Activated CD8-positive, alpha-beta T cell treated with anti-CD3 and anti-CD28 coated beads for 36 hours (primary cell): ENCODE measurements at regions of chr12 and their contacts with region 1.

Region 1: DNA sequence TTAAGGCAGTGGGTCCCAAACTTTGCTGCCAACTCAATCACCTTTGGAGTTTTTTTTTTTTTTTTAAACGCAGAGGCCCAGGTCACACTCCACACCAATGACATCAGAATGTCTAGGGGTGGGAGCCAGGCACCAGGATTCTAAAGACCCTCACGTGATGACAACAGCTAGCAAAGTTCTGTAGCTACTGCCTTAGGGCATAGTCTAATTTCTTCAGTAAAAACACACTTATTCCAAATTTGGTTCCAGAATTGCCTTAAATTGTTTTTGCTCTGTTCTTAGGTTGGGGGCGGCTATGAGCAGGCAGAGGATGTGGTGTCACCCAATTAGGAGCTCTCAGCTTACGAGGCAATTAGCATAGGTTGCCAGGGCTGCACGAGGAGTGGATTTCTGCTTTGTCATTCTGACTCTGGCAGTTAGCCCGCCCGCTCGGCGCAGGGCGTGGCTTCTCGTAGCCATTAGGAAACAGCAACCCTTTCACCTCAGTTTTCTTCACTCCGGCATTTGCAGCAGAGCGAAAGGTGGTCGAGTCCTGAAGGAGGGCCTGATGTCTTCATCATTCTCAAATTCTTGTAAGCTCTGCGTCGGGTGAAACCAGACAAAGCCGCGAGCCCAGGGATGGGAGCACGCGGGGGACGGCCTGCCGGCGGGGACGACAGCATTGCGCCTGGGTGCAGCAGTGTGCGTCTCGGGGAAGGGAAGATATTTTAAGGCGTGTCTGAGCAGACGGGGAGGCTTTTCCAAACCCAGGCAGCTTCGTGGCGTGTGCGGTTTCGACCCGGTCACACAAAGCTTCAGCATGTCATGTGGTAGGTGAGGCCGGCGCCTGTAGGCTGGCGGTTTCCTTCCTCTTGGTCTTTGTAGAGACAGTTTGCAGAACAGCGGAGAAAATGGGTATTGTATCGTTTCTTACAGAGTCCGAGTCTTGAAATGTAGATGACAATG is 16.7 kb upstream of the EID3 start:
- DNase-seq: peak; percentile 96
- ATAC-seq: peak; percentile 90
- H3K4me3 Mint-ChIP-seq: peak overlapping the region; percentile 93
- H3K27ac Mint-ChIP-seq: peak overlapping the region; percentile 98
- H3K4me1 Mint-ChIP-seq: peaks cover 12% of the 10 kb centered on the region
- H3K27me3 Mint-ChIP-seq: no peaks in the 10 kb centered on the region
- CTCF ChIP-seq: no peak

Region 2: GRCh38 chr12:104137913-104138796 is 148.7 kb before region 1 on chr12 and contains the start of gene NFYB:
- CTCF ChIA-PET with region 1: no interaction called
- POLR2A ChIA-PET with region 1: interaction called, 32 read pairs
- intact Hi-C with region 1: no loop called
- DNase-seq: peak; percentile 93
- ATAC-seq: peak; percentile 98
- H3K4me3 Mint-ChIP-seq: peak within 1 kb of the TSS; percentile 81
- H3K27ac Mint-ChIP-seq: peak within 1 kb of the TSS; percentile 92
- H3K4me1 Mint-ChIP-seq: peaks cover 18% of the 10 kb centered on the region
- H3K27me3 Mint-ChIP-seq: no peaks in the 10 kb centered on the region
- CTCF ChIP-seq: no peak
- total RNA-seq, gene NFYB: 26.7 to 30.6 TPM

Region 3: DNA sequence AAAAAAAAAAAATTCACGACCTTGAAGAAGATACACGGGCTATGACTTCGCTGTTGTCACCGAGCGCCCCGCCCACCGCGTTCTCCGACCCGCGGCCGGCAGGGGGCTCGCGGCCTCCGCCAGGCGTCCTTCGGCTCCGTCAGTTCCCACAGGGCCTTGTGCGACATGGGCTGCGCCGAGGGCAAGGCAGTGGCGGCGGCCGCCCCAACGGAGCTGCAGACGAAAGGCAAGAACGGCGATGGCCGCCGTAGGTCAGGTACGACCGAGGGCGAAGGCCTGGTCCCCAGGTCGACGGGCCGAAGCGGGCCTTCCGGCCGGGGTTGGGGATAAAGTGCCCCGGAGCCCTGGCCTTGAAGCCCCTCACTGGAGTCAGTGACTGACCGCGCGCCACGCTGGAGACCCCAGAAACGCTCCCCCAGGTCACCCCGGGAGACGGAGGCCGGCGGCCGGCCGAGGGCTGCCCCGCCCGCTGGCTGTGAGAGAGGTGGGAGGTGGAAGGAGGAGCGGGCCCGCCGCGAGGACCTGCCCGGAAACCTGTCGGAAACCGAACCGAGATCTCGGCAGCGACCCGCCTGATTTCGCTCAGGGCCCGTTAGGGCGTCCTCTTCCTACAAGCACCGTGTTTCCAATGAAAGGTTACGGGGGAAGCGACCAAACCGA is 71.0 kb before region 1 on chr12 and contains the start of gene TXNRD1:
- CTCF ChIA-PET with region 1: interaction called, 59 read pairs
- POLR2A ChIA-PET with region 1: interaction called, 118 read pairs
- intact Hi-C with region 1: loop called (anchors 5 kb)
- DNase-seq: peak; percentile 89
- ATAC-seq: peak; percentile 85
- H3K4me3 Mint-ChIP-seq: peak within 1 kb of the TSS; percentile 66
- H3K27ac Mint-ChIP-seq: peak within 1 kb of the TSS; percentile 78
- H3K4me1 Mint-ChIP-seq: peaks cover 33% of the 10 kb centered on the region
- H3K27me3 Mint-ChIP-seq: no peaks in the 10 kb centered on the region
- CTCF ChIP-seq: peak; percentile 83
- total RNA-seq, gene TXNRD1: 87.9 to 89.0 TPM

Region 4: DNA sequence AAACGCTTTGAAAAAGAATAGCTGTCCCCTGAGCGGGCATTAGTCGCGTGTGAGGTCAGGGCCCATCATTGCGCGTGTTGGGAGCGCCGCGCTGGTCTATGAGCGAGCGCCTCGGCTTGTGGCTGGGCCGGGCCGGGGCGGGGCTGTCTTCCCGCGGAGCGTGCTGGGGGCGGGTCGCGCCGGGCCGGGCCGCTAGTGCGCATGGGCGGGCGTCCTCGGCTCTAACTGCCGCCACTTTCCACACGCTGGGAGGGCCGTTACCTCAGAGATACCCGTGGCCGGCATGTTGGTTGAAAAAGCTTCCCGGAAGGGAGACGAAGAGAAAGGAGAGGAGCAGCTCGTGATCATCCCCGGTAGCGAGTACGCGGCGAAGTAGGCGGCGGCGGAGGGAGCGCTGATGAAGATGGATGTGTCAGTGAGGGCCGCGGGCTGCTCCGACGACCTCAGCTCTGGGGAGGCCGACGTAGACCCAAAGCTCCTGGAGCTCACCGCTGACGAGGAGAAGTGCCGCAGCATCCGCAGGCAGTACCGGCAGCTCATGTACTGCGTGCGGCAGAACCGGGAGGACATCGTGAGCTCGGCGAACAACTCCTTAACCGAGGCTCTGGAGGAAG is 16.8 kb after region 1 on chr12 and contains the start of gene EID3:
- CTCF ChIA-PET with region 1: interaction called, 9 read pairs
- POLR2A ChIA-PET with region 1: interaction called, 75 read pairs
- intact Hi-C with region 1: no loop called
- DNase-seq: peak; percentile 91
- ATAC-seq: peak; percentile 99
- H3K4me3 Mint-ChIP-seq: peak within 1 kb of the TSS; percentile 82
- H3K27ac Mint-ChIP-seq: peak within 1 kb of the TSS; percentile 96
- H3K4me1 Mint-ChIP-seq: peaks cover 57% of the 10 kb centered on the region
- H3K27me3 Mint-ChIP-seq: no peaks in the 10 kb centered on the region
- CTCF ChIP-seq: no peak
- total RNA-seq, gene EID3: 3.7 to 4.8 TPM

Region 5: GRCh38 chr12:104323899-104324298 is 37.1 kb after region 1 on chr12:
- CTCF ChIA-PET with region 1: no interaction called
- POLR2A ChIA-PET with region 1: no interaction called
- intact Hi-C with region 1: no loop called
- DNase-seq: no peak
- ATAC-seq: no peak
- H3K4me3 Mint-ChIP-seq: no peak overlapping the region
- H3K27ac Mint-ChIP-seq: no peak overlapping the region
- H3K4me1 Mint-ChIP-seq: no peaks in the 10 kb centered on the region
- H3K27me3 Mint-ChIP-seq: no peaks in the 10 kb centered on the region
- CTCF ChIP-seq: no peak